GM12878 (cell line): ENCODE measurements at regions of chr7 and their contacts with region 1.

Region 1: DNA sequence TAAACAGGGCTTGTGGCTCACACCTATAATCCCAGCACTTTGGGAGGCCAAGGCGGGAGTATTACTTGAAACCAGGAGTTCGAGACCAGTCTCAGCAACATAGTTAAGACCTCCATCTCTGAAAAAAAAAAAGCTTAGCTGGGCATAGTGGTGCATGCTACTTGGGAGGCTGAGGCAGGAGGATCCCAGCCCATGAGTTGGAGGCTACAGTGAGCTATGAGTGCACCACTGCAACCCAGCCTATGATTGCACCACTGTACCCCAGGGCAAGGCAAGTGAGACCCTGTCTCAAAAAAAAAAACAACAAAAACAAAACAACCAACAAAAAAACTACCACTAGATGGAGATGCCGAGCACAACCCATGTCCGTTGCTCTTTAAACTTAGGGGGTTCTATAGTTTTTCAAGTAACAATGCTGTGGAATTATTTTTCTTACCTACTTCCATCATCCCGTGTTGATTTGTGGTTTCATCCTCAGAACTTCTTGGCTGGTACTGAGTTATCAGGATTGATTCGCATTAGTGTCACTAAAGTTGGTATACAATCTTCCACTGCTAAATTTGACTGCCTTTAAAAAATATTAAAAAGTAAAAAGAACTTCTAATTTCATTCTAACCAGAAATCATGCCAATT is 12.2 kb upstream of the REPIN1 start:
- DNase-seq: no peak
- ATAC-seq: peak; percentile 53
- H3K4me3 ChIP-seq: no peak overlapping the region
- H3K27ac ChIP-seq: no peak overlapping the region
- H3K4me1 ChIP-seq: peaks cover 20% of the 10 kb centered on the region
- H3K27me3 ChIP-seq: no peaks in the 10 kb centered on the region
- CTCF ChIP-seq: peak; percentile 62 to 73 (median 64)
- EP300 ChIP-seq: no peak
- POLR2A ChIP-seq: no peak
- RAD21 ChIP-seq: peak; percentile 73

Region 2: GRCh38 chr7:150307904-150308303 is 48.5 kb before region 1 on chr7:
- CTCF ChIA-PET with region 1: no interaction called
- POLR2A ChIA-PET with region 1: no interaction called
- RAD21 ChIA-PET with region 1: no interaction called
- SMC1A ChIA-PET with region 1: no interaction called
- in situ Hi-C with region 1: no loop called
- intact Hi-C with region 1: no loop called
- DNase-seq: no peak
- ATAC-seq: no peak
- H3K4me3 ChIP-seq: no peak overlapping the region
- H3K27ac ChIP-seq: no peak overlapping the region
- H3K4me1 ChIP-seq: no peaks in the 10 kb centered on the region
- H3K27me3 ChIP-seq: no peaks in the 10 kb centered on the region
- CTCF ChIP-seq: no peak
- EP300 ChIP-seq: no peak
- POLR2A ChIP-seq: no peak
- RAD21 ChIP-seq: no peak

Region 3: DNA sequence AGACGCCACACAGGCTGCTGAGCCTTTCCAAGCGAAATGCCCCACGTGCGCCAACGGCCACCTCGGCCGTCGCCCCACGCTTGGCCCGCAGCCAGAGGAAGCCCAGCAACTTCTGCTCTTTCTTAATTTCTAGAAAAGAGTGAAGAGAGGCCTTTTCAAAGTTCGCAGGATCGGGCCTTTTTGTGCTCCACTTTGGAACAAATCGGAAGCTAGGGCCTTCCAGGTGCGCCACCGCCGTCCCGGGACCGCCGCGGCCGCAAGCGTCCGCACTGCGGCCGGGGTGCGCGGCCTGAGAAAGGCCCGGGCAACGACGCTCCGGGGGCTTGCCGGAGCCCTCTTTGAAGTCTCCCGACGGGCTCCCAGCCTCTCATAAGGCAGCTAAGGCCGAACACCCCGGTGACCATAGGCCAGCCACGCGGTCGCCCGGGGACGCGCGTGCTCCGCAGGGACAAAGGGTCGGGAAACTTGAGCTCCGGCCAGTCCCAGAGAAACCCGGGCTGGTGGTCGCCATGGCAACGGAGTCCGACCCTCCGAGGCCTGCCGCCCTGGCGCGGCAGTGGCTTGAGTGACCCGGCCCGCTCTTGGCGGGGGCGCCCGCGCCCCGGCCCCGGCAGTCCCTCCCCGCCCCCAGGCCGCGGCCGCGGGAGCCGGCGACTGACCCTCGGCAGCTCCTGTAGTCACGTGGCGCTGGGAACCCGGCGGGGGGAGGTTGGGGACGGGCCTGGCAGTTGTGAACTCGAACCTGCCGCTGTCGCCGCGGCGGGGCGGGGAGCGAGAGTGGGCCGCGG is 11.9 kb after region 1 on chr7 and contains the start of gene REPIN1:
- CTCF ChIA-PET with region 1: interaction called, 17 read pairs
- POLR2A ChIA-PET with region 1: interaction called, 7 read pairs
- RAD21 ChIA-PET with region 1: interaction called, 15 read pairs
- SMC1A ChIA-PET with region 1: interaction called, 10 read pairs
- in situ Hi-C with region 1: no loop called
- intact Hi-C with region 1: loop called (anchors 1 kb)
- DNase-seq: no peak
- ATAC-seq: peak; percentile 57
- H3K4me3 ChIP-seq: peak within 1 kb of the TSS; percentile 96
- H3K27ac ChIP-seq: peak within 1 kb of the TSS; percentile 97
- H3K4me1 ChIP-seq: peaks cover 30% of the 10 kb centered on the region
- H3K27me3 ChIP-seq: no peaks in the 10 kb centered on the region
- CTCF ChIP-seq: no peak
- EP300 ChIP-seq: peak in 1 of 2 experiments; percentile 59; a peak in 1 of 4 replicates
- POLR2A ChIP-seq: peak; percentile 93
- RAD21 ChIP-seq: no peak
- polyA plus RNA-seq, gene REPIN1: 5.1 to 12.6 TPM

Region 4: DNA sequence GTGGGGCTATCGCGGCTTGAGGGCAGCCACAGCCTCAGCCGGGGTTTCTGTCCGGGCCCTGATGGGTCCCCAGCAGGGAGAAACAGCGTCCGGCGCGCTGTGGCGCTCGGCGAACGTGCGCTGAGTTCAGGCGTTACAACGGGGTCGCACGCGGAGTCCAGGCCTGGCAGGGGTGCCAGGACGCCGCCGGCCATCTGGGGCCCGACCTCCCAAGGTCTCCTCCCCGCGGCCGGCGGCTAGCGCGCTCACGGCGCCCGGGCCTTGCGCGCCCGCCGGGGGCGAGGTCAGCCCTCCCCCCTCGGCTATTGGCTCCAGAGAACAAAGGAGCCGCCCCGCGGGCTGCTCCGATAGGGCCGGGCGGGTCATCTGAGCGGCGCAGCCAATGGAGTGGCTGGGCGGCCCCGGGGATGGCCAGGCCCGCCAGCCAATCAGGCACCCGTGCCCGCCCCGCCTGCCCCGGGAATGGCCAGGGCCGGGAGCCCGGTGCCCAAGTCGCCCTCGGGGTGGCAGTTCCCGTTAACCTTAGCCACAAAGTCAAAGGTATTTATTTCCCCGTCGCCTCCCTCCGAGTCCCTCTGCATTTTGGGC is 22.6 kb after region 1 on chr7 and contains the start of gene ZNF775:
- CTCF ChIA-PET with region 1: interaction called, 13 read pairs
- POLR2A ChIA-PET with region 1: interaction called, 8 read pairs
- RAD21 ChIA-PET with region 1: interaction called, 8 read pairs
- SMC1A ChIA-PET with region 1: interaction called, 19 read pairs
- in situ Hi-C with region 1: no loop called
- intact Hi-C with region 1: no loop called
- DNase-seq: no peak
- ATAC-seq: peak; percentile 87
- H3K4me3 ChIP-seq: peak within 1 kb of the TSS; percentile 99
- H3K27ac ChIP-seq: peak within 1 kb of the TSS; percentile 97
- H3K4me1 ChIP-seq: peaks cover 75% of the 10 kb centered on the region
- H3K27me3 ChIP-seq: no peaks in the 10 kb centered on the region
- CTCF ChIP-seq: no peak
- EP300 ChIP-seq: no peak
- POLR2A ChIP-seq: peak; percentile 93
- RAD21 ChIP-seq: no peak
- polyA plus RNA-seq, gene ZNF775: 0.05 to 0.46 TPM

Region 5: DNA sequence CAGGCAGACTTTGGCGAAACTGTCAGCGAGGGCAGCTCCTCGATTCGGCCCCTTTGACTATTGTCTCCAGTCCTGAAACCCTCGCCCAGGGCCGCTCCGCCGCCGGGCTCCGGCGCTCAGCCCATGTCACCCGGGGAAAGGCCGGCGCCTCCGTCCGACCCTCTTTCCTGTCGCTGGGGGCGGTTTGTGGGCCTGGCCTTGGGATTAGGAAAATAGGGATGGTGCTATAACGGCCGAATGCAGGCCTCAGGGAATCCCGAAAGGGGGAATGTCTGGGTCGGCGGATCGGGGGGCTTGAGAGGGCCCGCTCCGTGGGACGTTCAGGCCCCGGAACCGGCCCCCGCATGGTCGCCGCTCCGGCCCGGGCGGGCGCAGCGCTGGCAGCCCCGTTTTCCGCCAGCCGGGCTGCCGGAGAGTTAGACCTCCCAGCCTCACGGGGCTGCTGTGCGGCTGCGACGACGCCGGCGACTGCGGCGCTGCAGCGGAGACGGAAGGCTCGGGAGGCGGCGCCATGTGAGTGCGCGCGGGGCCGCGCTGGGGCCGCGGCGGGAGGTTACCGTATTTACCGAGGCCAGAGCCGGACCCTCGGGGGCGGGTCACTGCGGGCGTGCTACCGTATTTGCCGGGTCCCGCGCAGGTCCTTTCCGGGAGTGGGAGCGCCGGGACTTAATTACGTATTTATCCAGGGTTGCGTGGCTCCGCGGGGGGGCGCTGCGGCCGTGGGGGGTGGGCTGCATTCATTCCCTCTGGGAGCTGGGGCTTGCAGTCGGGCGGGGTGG is 48.6 kb after region 1 on chr7:
- CTCF ChIA-PET with region 1: interaction called, 72 read pairs
- POLR2A ChIA-PET with region 1: interaction called, 5 read pairs
- RAD21 ChIA-PET with region 1: interaction called, 16 read pairs
- SMC1A ChIA-PET with region 1: interaction called, 48 read pairs
- in situ Hi-C with region 1: loop called (anchors 5 kb)
- intact Hi-C with region 1: no loop called
- DNase-seq: no peak
- ATAC-seq: peak; percentile 62
- H3K4me3 ChIP-seq: peak overlapping the region; percentile 91
- H3K27ac ChIP-seq: peak overlapping the region; percentile 89
- H3K4me1 ChIP-seq: peaks cover 58% of the 10 kb centered on the region
- H3K27me3 ChIP-seq: no peaks in the 10 kb centered on the region
- CTCF ChIP-seq: peak; percentile 13 to 39 (median 19); a peak in 4 of 6 replicates
- EP300 ChIP-seq: peak in 1 of 2 experiments; percentile 53; a peak in 1 of 4 replicates
- POLR2A ChIP-seq: peak; percentile 94
- RAD21 ChIP-seq: no peak

Region 6: DNA sequence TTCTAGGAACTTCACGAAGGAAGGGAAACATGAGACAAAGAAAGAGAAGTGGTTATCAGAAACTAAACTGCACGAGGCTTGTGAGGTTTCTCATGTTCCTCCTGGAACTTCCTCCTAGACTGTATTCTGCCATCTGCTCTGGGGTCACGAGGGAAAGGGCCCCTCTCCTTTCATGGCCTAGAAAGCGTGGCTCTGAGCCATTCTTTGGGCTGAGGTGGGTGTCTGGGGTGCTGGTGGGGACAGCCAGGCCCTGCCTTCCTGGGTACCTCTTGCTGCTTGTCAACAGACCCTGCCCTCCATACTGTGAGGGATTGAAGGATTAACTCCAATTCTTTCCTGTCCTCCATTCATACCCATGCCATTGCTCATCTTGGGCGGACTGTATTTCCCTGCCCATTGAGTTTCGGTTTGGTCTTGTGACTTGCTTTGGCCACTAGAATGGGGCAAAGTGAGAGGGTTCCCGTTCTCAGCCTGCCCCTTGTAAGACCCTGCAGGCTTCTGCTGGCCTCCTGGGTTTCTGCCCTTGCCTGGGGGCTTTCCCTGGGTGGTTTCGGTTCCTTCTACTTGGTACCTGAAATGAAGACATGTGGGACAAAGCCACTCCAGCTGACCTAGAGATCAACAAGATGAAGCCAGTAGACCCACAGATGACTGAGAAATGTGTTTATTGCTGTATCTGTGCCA is 79.2 kb after region 1 on chr7:
- CTCF ChIA-PET with region 1: interaction called, 29 read pairs
- POLR2A ChIA-PET with region 1: interaction called, 3 read pairs
- RAD21 ChIA-PET with region 1: no interaction called
- SMC1A ChIA-PET with region 1: interaction called, 6 read pairs
- in situ Hi-C with region 1: no loop called
- intact Hi-C with region 1: no loop called
- DNase-seq: peak; percentile 97
- ATAC-seq: peak; percentile 90
- H3K4me3 ChIP-seq: peak overlapping the region; percentile 74
- H3K27ac ChIP-seq: peak overlapping the region; percentile 100
- H3K4me1 ChIP-seq: peaks cover 29% of the 10 kb centered on the region
- H3K27me3 ChIP-seq: no peaks in the 10 kb centered on the region
- CTCF ChIP-seq: no peak
- EP300 ChIP-seq: peak; percentile 82 to 89
- POLR2A ChIP-seq: peak; percentile 64
- RAD21 ChIP-seq: no peak